Activated naive CD8-positive, alpha-beta T cell treated with anti-CD3 and anti-CD28 coated beads, Interleukin-2, amount 10 ng/mL, durations not matched to agents 7 days and 5 days (primary cell): ENCODE measurements at regions of chr19 and their contacts with region 1.

Region 1: DNA sequence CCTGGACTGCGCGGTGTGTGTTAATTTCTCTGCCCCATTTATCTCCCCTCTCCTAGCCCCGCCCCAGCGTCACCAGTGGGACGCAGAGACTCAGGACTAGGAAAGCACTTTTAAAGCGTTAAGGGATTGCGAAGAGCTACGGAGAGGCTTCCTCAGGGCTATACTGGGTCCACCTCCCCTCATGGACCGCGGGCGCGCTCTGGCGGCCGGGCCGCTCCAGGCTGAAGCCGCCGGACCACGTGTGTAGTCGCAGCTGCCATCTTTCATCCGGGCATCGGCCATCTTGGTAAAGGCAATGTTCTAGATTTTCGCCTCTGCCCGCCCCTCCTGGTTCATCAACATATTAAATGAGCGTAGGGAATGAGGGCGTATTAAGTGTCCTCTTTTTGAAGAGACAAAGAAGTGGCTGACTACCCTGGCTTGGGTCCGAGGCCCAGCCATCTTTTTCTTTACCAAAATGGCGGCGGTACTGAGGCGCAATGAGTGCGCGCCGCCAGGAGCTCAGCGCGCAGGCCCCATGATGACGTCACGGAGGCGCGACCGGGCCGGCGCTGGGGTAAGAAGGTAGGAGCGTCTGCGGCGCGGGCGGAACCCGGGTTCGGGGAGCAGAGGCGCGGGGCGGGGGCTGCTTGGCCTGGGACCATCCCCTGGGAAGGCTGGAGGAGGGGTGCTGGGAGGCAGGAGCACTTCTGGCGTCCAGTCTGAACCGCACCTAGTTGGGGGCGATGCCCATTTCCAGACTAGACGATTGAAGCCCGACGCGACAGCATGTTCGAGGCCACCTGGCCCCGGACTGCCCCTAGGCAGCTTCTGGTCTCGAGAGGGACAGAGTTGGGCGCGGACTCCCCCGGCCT is at the start of gene CCDC124:
- DNase-seq: peak; percentile 96
- ATAC-seq: peak; percentile 98
- H3K4me3 Mint-ChIP-seq: peak within 1 kb of the TSS; percentile 94
- H3K27ac Mint-ChIP-seq: peak within 1 kb of the TSS; percentile 95
- H3K4me1 Mint-ChIP-seq: peaks cover 16% of the 10 kb centered on the region
- H3K27me3 Mint-ChIP-seq: peaks cover 1% of the 10 kb centered on the region
- total RNA-seq, gene CCDC124: 54.2 to 56.4 TPM

Region 2: DNA sequence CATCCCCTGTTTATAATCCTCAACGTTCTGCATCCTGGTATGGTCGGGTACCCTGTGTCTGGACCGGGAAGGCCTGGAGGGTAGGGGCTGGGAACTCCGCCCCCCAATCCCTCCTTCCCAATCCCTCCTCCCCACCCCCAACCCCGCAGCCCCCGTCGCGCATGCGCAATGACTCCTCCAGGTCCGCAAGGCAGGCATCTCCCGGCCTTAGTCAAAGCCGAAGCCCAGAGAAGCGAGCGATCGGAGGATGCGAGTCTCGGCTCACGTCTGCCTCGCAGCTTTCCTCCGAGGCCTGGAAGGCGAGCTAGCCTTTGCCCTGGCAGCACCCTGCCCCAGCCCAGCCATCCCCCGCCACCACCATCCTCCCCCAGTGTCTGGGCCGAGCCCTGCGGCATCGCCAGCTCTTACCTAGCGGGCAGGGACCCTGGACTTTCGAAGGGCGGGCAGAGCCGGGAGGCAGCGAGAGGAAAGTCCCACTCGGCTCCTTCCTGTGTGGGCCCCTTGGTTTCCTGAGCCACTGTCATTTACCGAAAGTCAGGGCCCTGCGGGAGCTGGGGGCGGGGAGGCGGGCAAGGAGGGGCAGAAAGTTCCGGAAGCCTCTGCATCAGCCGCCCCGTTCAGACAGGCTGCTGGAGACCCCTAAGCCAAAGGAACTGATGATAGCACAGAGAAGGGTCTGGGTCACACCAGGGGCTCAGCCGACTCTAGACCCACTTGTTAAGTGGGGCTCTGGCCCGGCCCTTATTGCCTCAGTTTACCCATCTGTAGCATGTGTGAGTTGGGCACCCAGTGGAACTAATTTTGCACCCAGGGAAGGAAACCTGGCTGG is 85.0 kb before region 1 on chr19 and contains the start of gene JAK3:
- POLR2A ChIA-PET with region 1: interaction called, 18 read pairs
- DNase-seq: peak; percentile 86
- ATAC-seq: peak; percentile 84
- H3K4me3 Mint-ChIP-seq: peak within 1 kb of the TSS; percentile 94
- H3K27ac Mint-ChIP-seq: peak within 1 kb of the TSS; percentile 94
- H3K4me1 Mint-ChIP-seq: peaks cover 48% of the 10 kb centered on the region
- H3K27me3 Mint-ChIP-seq: no peaks in the 10 kb centered on the region
- total RNA-seq, gene JAK3: 119 to 122 TPM

Region 3: DNA sequence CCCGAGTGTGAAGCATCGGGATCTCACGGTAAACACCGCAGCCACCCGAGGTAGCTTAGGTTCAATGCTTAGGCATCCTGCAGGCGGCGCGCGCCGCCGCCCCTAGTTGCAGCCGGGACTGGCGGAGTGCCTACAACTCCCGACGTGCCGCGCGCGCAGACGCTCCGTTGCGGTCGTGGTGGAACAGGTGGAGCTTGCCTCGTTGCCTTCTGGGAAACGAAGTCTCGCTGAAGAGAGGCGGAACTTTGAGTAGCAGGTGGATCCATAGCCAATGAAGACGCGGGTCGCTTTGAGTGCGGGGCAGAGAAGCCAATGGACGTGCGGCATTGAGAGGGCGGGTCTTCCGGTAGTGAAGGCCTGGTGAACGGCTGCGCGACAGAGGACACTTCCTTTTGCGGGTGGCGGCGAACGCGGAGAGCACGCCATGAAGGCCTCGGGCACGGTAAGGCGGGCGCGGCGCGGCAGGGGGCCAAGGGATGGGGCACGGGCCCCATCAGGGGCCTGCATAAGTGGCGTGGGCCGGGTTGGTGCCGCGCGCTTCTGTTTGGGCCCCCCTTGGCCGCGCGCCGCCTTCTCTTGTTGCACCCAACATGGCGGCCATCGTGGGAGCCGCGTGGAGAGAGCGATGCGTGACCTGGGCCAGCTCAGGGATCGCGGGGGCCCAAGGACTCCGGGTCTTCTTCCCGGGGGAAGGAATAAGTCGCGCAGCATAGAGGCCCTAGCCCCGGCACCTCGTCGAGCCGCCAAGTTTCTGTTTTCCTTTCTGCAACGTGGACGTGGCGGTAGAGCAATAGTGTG is 73.0 kb before region 1 on chr19 and contains the start of gene RPL18A:
- POLR2A ChIA-PET with region 1: interaction called, 195 read pairs
- DNase-seq: peak; percentile 94
- ATAC-seq: peak; percentile 94
- H3K4me3 Mint-ChIP-seq: peak within 1 kb of the TSS; percentile 95
- H3K27ac Mint-ChIP-seq: peak within 1 kb of the TSS; percentile 91
- H3K4me1 Mint-ChIP-seq: peaks cover 23% of the 10 kb centered on the region
- H3K27me3 Mint-ChIP-seq: no peaks in the 10 kb centered on the region
- total RNA-seq, gene RPL18A: 2,260 to 2,272 TPM

Region 4: DNA sequence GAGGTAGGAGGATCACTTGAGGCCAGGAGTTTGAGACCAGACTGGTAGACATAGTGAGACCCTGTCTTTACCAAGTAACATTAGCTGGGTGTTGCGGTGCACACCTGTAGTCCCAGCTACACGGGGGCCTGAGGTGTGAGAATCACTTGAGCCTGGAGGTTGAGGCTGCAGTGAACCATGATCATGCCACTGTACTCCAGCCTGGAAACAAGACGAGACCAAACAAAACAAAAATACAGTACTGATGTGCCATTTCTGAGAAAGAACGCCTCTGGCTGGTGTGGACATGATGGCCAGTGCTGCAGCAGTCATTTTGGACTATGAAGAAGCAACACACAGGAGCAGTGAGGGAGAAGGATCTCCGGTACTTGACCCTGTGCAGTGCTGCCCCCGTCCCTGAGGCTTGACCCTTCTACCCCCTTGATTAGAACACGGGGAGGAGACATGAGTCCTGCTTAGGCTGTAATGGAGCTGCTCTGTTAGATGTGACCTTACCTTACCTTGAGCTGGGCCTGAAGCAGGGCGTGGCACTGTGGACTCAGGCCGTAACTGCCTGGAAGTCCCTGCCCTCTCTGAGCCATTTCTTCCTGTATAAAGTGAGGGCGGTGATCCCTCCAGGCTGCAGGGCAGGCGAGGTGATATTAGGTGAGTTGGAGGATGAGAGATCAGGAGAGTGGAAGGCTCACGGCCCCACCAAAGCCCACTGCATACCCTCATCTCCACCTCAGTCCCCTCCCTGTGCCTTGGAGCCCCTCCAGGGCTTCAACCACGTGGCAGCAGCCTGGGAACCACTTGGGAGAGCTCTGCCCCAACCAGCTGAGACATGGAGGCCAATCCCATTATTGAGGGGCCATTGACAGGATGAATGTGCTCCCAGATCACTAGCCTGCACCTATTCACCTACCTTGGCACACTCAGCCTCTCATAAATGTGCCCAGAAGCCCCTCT is 67.1 kb before region 1 on chr19:
- POLR2A ChIA-PET with region 1: interaction called, 195 read pairs
- DNase-seq: no peak
- ATAC-seq: no peak
- H3K4me3 Mint-ChIP-seq: no peak overlapping the region
- H3K27ac Mint-ChIP-seq: no peak overlapping the region
- H3K4me1 Mint-ChIP-seq: peaks cover 18% of the 10 kb centered on the region
- H3K27me3 Mint-ChIP-seq: no peaks in the 10 kb centered on the region

Region 5: DNA sequence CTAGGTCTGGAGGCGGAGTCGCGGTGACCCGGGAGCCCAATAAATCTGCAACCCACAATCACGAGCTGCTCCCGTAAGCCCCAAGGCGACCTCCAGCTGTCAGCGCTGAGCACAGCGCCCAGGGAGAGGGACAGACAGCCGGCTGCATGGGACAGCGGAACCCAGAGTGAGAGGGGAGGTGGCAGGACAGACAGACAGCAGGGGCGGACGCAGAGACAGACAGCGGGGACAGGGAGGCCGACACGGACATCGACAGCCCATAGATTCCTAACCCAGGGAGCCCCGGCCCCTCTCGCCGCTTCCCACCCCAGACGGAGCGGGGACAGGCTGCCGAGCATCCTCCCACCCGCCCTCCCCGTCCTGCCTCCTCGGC is 60.8 kb before region 1 on chr19 and contains the start of gene SLC5A5:
- POLR2A ChIA-PET with region 1: interaction called, 29 read pairs
- DNase-seq: peak; percentile 67
- ATAC-seq: peak; percentile 22
- H3K4me3 Mint-ChIP-seq: peak within 1 kb of the TSS; percentile 93
- H3K27ac Mint-ChIP-seq: peak within 1 kb of the TSS; percentile 85
- H3K4me1 Mint-ChIP-seq: peaks cover 12% of the 10 kb centered on the region
- H3K27me3 Mint-ChIP-seq: no peaks in the 10 kb centered on the region
- total RNA-seq, gene SLC5A5: 1.8 to 2.2 TPM

Region 6: GRCh38 chr19:17985037-17985818 is 52.5 kb after region 1 on chr19:
- POLR2A ChIA-PET with region 1: no interaction called
- DNase-seq: no peak
- ATAC-seq: no peak
- H3K4me3 Mint-ChIP-seq: no peak overlapping the region
- H3K27ac Mint-ChIP-seq: no peak overlapping the region
- H3K4me1 Mint-ChIP-seq: peaks cover 8% of the 10 kb centered on the region
- H3K27me3 Mint-ChIP-seq: peaks cover 7% of the 10 kb centered on the region

Region 7: DNA sequence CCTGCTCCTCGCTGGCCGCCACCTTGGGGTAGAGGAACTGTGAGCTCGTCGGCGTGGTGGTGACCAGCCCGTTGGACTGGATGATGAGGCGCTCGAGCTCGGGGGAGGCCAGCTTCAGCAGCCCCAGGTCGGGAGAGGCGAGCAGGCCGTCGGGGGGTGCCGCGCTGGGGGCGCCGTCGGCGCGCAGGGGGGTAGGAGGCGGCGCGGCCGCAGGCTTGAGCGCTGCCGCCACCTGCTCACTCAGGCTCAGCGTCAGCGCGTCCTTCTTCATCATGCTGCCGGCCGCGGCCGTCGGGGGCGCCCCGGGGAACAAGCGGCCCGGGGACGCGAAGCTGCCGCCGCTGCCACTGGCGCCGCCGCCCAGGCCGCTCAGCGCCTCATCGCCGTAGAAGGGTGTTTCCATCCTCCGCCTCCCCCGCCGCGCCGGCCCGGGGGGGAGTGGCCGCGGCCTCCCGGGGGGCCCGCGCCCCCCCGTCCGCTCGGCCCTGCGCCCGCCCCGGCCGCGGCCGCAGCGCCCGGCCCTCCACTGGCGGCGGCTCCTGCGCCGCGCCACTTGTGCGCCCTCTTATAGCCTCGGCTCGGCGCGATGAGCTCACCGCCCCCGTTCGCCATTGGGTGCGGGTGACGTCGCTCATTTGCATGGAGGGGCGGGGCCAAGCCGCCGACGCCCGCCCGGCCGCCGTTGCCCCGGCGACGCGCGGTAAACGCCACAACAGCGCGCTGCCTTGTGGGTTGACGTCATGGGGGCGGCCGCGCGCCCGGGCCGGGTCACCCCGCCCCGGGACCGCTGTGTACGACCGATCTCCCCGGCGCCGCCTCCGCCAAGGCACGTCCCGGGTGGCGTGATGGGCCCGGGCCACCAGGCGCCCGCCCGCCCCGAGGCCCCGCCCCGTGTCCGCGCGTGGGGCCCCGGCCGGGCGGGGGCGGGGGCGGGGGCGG is 348.6 kb after region 1 on chr19 and contains the start of gene JUND:
- POLR2A ChIA-PET with region 1: no interaction called
- DNase-seq: peak; percentile 99
- ATAC-seq: peak; percentile 73
- H3K4me3 Mint-ChIP-seq: peak within 1 kb of the TSS; percentile 90
- H3K27ac Mint-ChIP-seq: peak within 1 kb of the TSS; percentile 98
- H3K4me1 Mint-ChIP-seq: peaks cover 39% of the 10 kb centered on the region
- H3K27me3 Mint-ChIP-seq: no peaks in the 10 kb centered on the region
- total RNA-seq, gene JUND: 366 to 394 TPM